GM13977 (cell line): ENCODE measurements at regions of chr11 and their contacts with region 1.

Region 1: DNA sequence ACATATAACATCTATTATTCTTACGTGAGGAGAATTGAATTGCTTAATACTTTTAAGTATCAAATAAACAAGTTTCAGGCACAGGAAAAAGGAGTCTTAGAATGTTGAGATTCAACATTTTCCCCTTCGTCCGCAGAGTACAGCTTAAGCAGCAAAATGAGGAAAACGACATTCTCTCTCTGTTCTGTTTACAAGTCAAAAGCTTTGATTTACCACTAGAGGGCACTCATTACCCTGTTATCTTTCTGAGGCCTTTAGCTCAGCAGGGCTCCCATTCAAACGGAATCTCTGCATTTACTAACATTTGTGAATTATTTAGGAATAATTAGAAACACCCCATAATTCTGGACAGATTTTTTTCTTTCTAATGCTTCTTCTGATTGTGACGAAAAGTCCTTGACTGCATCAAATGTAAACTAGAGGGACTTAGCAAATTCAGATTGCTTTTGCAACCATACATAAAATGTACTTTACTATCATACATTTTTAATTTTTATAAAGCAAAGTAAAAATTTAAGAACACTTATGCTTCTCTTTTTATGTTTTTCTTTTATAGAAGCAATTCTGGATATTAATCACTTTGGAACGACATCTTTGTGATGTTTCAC is 75.0 kb downstream of the JRKL start:
- DNase-seq: peak; percentile 58
- CTCF ChIP-seq: peak; percentile 78

Region 2: DNA sequence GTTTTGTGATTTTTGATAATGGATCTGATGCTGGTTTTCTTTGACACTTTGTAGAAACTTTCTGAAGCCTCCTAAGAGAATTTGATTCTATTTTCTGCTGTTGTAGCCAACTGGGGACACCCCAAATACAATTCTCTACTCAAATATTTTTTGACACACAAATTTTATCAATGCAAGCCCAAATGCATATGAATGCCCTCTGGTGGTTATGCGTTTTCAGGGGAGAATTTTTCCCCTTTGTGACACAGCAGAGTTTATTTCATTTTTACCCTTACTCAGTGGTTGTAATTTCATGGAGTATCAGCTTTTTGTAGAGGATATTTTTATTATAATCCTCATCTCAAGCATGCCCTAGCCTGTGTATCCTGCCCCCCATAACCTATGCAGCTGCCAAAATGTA is 496.2 kb before region 1 on chr11:
- in situ Hi-C with region 1: no loop called
- DNase-seq: no peak
- CTCF ChIP-seq: peak; percentile 21

Region 3: DNA sequence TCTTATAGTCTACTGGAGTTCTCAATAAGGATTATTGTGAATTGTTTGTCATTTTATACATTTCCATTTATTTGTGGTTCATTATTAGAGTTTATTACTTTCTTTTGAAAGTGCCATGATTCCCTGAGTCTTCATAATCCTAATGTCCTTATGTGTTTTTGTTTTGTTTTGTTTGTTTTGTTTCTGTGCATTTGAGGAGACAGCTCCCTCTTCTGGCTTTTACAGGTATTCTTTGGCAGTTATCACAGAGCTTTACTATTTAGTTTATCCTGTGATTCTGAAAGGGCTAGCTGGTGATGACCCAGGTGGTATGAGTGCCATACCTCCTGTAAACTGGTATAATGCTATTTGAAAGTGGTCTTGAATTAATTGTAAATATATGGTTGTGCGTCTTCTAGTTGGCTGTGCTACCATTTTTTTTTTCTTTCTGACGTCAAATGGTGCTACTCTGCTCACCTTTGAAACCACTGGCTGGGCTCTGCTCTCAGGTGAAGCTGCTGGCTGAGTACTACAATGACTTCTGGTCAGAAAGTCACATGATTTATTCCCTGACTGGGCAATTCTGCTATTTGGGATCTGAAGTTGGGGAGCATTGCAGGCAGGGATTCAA is 676.2 kb after region 1 on chr11:
- in situ Hi-C with region 1: loop called (anchors 25 kb)
- DNase-seq: peak; percentile 4
- CTCF ChIP-seq: peak; percentile 61